ENCODE measurements at regions of chr11 and their contacts with region 1.

Region 1: GRCh38 chr11:6377902-6378639 is 12.2 kb upstream of the SMPD1 start:
- DNase-seq: peak; percentile 61
- ATAC-seq: peak; percentile 57
- H3K4me3 ChIP-seq: peak overlapping the region in 3 of 5 experiments; percentile 0 to 27 (median 21)
- H3K4me3 Mint-ChIP-seq: peak overlapping the region; percentile 68
- H3K27ac ChIP-seq: peak overlapping the region; percentile 66 to 73
- H3K27ac Mint-ChIP-seq: peak overlapping the region; percentile 88
- H3K4me1 ChIP-seq: peaks cover 16 to 17% of the 10 kb centered on the region in 2 donors
- H3K4me1 Mint-ChIP-seq: peaks cover 20% of the 10 kb centered on the region
- H3K27me3 ChIP-seq: no peaks in the 10 kb centered on the region
- H3K27me3 Mint-ChIP-seq: no peaks in the 10 kb centered on the region
- CTCF ChIP-seq: no peak

Region 2: GRCh38 chr11:6389921-6390724 is 12.1 kb after region 1 on chr11 and contains the start of gene SMPD1:
- CTCF ChIA-PET with region 1: interaction called, 65 read pairs
- POLR2A ChIA-PET with region 1: interaction called, 7 read pairs
- intact Hi-C with region 1: no loop called
- DNase-seq: peak; percentile 96
- ATAC-seq: peak; percentile 94
- H3K4me3 ChIP-seq: peak within 1 kb of the TSS; percentile 70 to 93 (median 85)
- H3K4me3 Mint-ChIP-seq: peak within 1 kb of the TSS; percentile 97
- H3K27ac ChIP-seq: peak within 1 kb of the TSS; percentile 98
- H3K27ac Mint-ChIP-seq: peak within 1 kb of the TSS; percentile 98
- H3K4me1 ChIP-seq: peaks cover 18 to 32% of the 10 kb centered on the region in 2 donors
- H3K4me1 Mint-ChIP-seq: peaks cover 32% of the 10 kb centered on the region
- H3K27me3 ChIP-seq: no peaks in the 10 kb centered on the region
- H3K27me3 Mint-ChIP-seq: no peaks in the 10 kb centered on the region
- CTCF ChIP-seq: no peak
- total RNA-seq, gene SMPD1: 18.3 TPM in 2 replicates

Region 3: GRCh38 chr11:6431861-6432260 is 53.8 kb after region 1 on chr11:
- CTCF ChIA-PET with region 1: interaction called, 17 read pairs
- POLR2A ChIA-PET with region 1: no interaction called
- intact Hi-C with region 1: no loop called
- DNase-seq: no peak
- ATAC-seq: no peak
- H3K4me3 ChIP-seq: no peak overlapping the region
- H3K4me3 Mint-ChIP-seq: no peak overlapping the region
- H3K27ac ChIP-seq: no peak overlapping the region
- H3K27ac Mint-ChIP-seq: no peak overlapping the region
- H3K4me1 ChIP-seq: peaks cover 7 to 11% of the 10 kb centered on the region in 2 donors
- H3K4me1 Mint-ChIP-seq: peaks cover 12% of the 10 kb centered on the region
- H3K27me3 ChIP-seq: no peaks in the 10 kb centered on the region
- H3K27me3 Mint-ChIP-seq: no peaks in the 10 kb centered on the region
- CTCF ChIP-seq: no peak

Region 4: GRCh38 chr11:6489306-6489705 is 111.2 kb after region 1 on chr11:
- CTCF ChIA-PET with region 1: interaction called, 27 read pairs
- POLR2A ChIA-PET with region 1: no interaction called
- intact Hi-C with region 1: no loop called
- DNase-seq: no peak
- ATAC-seq: no peak
- H3K4me3 ChIP-seq: no peak overlapping the region
- H3K4me3 Mint-ChIP-seq: no peak overlapping the region
- H3K27ac ChIP-seq: no peak overlapping the region
- H3K27ac Mint-ChIP-seq: no peak overlapping the region
- H3K4me1 ChIP-seq: no peaks in the 10 kb centered on the region
- H3K4me1 Mint-ChIP-seq: no peaks in the 10 kb centered on the region
- H3K27me3 ChIP-seq: no peaks in the 10 kb centered on the region
- H3K27me3 Mint-ChIP-seq: no peaks in the 10 kb centered on the region
- CTCF ChIP-seq: no peak

Region 5: GRCh38 chr11:6531267-6531752 is 153.2 kb after region 1 on chr11:
- CTCF ChIA-PET with region 1: interaction called, 11 read pairs
- POLR2A ChIA-PET with region 1: no interaction called
- intact Hi-C with region 1: no loop called
- DNase-seq: peak; percentile 66
- ATAC-seq: peak; percentile 57
- H3K4me3 ChIP-seq: no peak overlapping the region
- H3K4me3 Mint-ChIP-seq: no peak overlapping the region
- H3K27ac ChIP-seq: no peak overlapping the region
- H3K27ac Mint-ChIP-seq: no peak overlapping the region
- H3K4me1 ChIP-seq: peaks cover 4 to 5% of the 10 kb centered on the region in 2 donors
- H3K4me1 Mint-ChIP-seq: peaks cover 5% of the 10 kb centered on the region
- H3K27me3 ChIP-seq: no peaks in the 10 kb centered on the region
- H3K27me3 Mint-ChIP-seq: no peaks in the 10 kb centered on the region
- CTCF ChIP-seq: peak; percentile 83

Region 6: GRCh38 chr11:6682936-6683861 is 305.1 kb after region 1 on chr11 and contains the start of gene MRPL17:
- CTCF ChIA-PET with region 1: interaction called, 20 read pairs
- POLR2A ChIA-PET with region 1: no interaction called
- intact Hi-C with region 1: no loop called
- DNase-seq: peak; percentile 100
- ATAC-seq: peak; percentile 96
- H3K4me3 ChIP-seq: peak within 1 kb of the TSS; percentile 80 to 91 (median 84)
- H3K4me3 Mint-ChIP-seq: peak within 1 kb of the TSS; percentile 99
- H3K27ac ChIP-seq: peak within 1 kb of the TSS; percentile 74 to 91
- H3K27ac Mint-ChIP-seq: peak within 1 kb of the TSS; percentile 99
- H3K4me1 ChIP-seq: peaks cover 12% of the 10 kb centered on the region in 2 donors
- H3K4me1 Mint-ChIP-seq: peaks cover 25% of the 10 kb centered on the region
- H3K27me3 ChIP-seq: no peaks in the 10 kb centered on the region
- H3K27me3 Mint-ChIP-seq: no peaks in the 10 kb centered on the region
- CTCF ChIP-seq: peak; percentile 88
- total RNA-seq, gene MRPL17: 18.2 and 23.1 TPM in 2 replicates

Measured in B cell (primary cell).